A673 (cell line): ENCODE measurements at regions of chr11 and their contacts with region 1.

Region 1: GRCh38 chr11:68206187-68206601 is 6.9 kb downstream of the KMT5B start:
- DNase-seq: peak; percentile 82
- H3K4me3 ChIP-seq: no peak overlapping the region
- H3K27ac ChIP-seq: no peak overlapping the region
- H3K4me1 ChIP-seq: peaks cover 10% of the 10 kb centered on the region
- H3K27me3 ChIP-seq: no peaks in the 10 kb centered on the region
- CTCF ChIP-seq: peak; percentile 92

Region 2: GRCh38 chr11:68003846-68004550 is 202.2 kb before region 1 on chr11 and contains the start of gene UNC93B1:
- CTCF ChIA-PET with region 1: interaction called, 4 read pairs
- POLR2A ChIA-PET with region 1: no interaction called
- intact Hi-C with region 1: loop called (anchors 10 kb)
- DNase-seq: peak; percentile 77
- H3K4me3 ChIP-seq: peak within 1 kb of the TSS; percentile 54
- H3K27ac ChIP-seq: no peak within 1 kb of the TSS
- H3K4me1 ChIP-seq: peaks cover 6% of the 10 kb centered on the region
- H3K27me3 ChIP-seq: peaks cover 5% of the 10 kb centered on the region
- CTCF ChIP-seq: no peak
- total RNA-seq, gene UNC93B1: 1.4 and 2.4 TPM in 2 replicates

Region 3: GRCh38 chr11:68030318-68031138 is 175.7 kb before region 1 on chr11 and contains the start of gene NDUFS8:
- CTCF ChIA-PET with region 1: no interaction called
- POLR2A ChIA-PET with region 1: no interaction called
- intact Hi-C with region 1: loop called (anchors 10 kb)
- DNase-seq: peak; percentile 100
- H3K4me3 ChIP-seq: peak within 1 kb of the TSS; percentile 76
- H3K27ac ChIP-seq: peak within 1 kb of the TSS; percentile 88
- H3K4me1 ChIP-seq: peaks cover 8% of the 10 kb centered on the region
- H3K27me3 ChIP-seq: no peaks in the 10 kb centered on the region
- CTCF ChIP-seq: no peak
- total RNA-seq, gene NDUFS8: 220 and 234 TPM in 2 replicates